Tibial artery (tissue), 4 donors: ENCODE measurements at regions of chr13 and their contacts with region 1.

Region 1: DNA sequence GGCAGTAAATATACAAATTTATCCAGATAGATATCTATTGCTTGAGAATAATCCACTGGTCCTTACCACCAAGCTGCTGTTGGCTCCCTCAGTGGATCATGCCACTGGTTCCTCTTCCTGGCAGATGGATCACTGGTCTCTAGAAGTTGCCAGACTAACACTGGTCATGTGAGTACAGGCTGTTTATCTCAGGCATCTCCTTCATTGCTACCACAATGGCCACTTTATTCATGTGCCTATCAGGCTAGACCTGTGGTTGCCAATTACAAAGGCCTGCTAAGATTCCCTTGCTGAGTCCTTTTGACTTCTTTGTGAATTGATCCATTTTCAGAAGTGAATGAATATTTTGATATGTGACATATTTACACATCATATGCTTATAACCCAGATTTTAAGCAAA is 1659.5 kb upstream of the PCDH20 start:
- DNase-seq: no peak
- H3K4me3 ChIP-seq: no peak overlapping the region
- H3K27ac ChIP-seq: no peak overlapping the region
- H3K4me1 ChIP-seq: no peaks in the 10 kb centered on the region
- H3K27me3 ChIP-seq: no peaks in the 10 kb centered on the region
- CTCF ChIP-seq: no peak

Region 2: DNA sequence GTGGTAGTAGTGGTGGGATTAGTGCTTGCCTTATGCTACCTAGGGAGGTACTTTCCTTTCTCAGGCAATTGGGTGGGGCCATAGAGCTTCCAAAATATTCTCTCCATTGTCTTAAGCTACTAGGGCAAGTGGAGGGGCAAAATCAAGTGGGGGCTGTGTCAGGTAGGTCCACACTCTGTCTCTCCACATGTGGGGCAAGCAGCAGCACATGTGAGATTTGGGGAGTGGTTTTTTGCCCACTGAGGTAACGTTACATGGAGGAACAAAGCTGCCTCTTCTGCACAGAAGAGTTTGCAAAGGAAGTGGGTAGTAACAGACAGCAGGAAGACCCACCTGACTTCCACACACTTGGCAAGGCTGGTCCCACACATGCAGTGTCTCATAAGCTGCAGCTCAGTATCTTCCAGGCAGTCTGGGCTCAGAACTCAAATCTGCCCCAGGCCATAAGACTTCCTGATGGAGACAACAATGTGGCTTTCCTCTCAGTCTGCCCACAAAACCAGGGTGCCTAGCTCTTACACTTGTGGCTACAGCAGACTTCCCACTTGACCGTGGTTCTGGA is 78.0 kb before region 1 on chr13:
- intact Hi-C with region 1: no loop called
- DNase-seq: no peak
- H3K4me3 ChIP-seq: no peak overlapping the region
- H3K27ac ChIP-seq: no peak overlapping the region
- H3K4me1 ChIP-seq: no peaks in the 10 kb centered on the region
- H3K27me3 ChIP-seq: no peaks in the 10 kb centered on the region
- CTCF ChIP-seq: no peak

Region 3: GRCh38 chr13:63175536-63175935 is 100.4 kb after region 1 on chr13:
- intact Hi-C with region 1: loop called (anchors 5 kb)
- DNase-seq: no peak
- H3K4me3 ChIP-seq: no peak overlapping the region
- H3K27ac ChIP-seq: no peak overlapping the region
- H3K4me1 ChIP-seq: no peaks in the 10 kb centered on the region
- H3K27me3 ChIP-seq: no peaks in the 10 kb centered on the region
- CTCF ChIP-seq: no peak